ENCODE measurements at regions of chr19 and their contacts with region 1.

Region 1: DNA sequence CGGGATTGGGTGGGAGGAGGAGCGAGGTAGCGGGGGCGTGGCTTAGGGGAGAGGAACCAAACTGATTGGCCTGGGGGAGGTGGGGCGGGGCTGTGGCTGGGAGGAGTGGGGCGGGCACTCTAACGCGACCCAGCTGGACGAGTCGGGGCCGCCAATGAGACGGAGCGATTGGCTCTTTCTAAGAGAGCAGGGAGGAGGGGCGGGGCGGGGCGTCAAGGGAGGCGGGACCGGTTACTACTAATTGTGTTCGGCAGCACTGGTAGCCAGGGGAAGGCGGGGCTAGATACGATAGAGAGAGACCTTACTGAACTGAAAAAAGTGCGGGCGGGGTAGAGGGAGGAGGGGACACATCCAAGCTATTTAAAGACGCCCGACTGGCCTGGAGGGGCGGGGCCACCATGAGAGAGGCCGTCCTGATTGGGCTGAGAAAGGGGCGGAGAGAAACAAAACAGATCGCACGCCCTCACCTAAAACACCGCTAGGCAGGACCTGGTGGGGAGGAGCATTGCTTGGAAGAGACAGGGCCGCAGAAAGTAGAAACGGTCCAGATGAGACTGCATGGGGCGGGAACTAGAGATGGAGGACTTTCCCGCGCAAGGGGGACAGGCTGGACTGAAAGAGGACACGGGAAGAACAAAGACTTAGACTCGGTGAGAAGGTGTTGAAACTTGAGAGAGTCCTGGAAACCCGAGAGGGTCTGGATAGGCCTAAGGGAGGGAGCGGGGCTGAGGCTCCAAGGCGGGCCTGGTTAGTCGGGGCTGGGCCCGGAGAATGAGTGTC is at the start of gene KCNC3:
- DNase-seq: peak; percentile 92
- ATAC-seq: peak; percentile 78
- H3K4me3 ChIP-seq: peak within 1 kb of the TSS; percentile 49 to 63
- H3K27ac ChIP-seq: peak within 1 kb of the TSS; percentile 71
- H3K4me1 ChIP-seq: peaks cover 12% of the 10 kb centered on the region
- H3K27me3 ChIP-seq: no peaks in the 10 kb centered on the region
- CTCF ChIP-seq: no peak
- total RNA-seq, gene KCNC3: 10.8 TPM

Region 2: DNA sequence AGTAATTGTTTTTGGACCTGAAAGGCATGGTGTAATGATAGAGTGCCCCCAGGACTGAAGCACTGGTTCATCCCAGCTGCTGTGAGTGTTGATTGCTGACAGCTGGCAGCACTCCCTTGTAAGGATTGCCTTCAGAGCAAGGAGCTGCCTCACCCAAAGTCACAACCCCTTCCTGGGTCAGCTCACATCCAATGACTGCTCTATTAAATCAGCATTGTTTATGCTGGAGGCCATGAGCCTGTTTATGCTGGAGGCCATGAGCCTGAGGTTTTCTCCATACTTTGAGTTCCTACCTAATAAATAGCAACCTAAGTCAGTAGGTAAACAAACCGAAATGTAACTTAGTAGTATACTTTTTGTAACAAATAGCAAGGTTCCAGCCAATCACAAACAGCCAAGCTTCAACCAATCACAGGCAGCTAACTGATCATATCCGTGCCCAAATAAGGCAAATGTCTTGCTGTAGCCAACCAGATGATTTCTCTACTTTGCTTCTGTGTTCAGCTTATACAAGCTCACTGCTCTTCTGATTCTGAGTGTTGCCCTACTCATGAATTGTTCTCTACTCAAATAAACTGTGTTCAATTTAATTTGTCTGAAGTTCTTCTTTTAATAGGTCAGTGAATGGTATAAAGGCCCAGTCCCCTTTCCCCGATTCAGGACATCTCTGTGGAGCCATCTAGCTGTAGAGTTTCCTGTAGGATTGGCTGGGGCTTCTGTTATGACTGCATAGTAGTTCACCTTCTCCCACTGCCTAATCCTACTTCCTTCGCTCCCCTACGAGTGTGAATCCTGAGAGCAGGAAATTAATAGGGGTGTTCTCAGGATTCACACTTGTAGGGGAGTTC is 1352.2 kb after region 1 on chr19:
- CTCF ChIA-PET with region 1: interaction called, 10 read pairs
- POLR2A ChIA-PET with region 1: no interaction called
- in situ Hi-C with region 1: no loop called
- intact Hi-C with region 1: no loop called
- DNase-seq: no peak
- ATAC-seq: no peak
- H3K4me3 ChIP-seq: no peak overlapping the region
- H3K27ac ChIP-seq: no peak overlapping the region
- H3K4me1 ChIP-seq: no peaks in the 10 kb centered on the region
- H3K27me3 ChIP-seq: no peaks in the 10 kb centered on the region
- CTCF ChIP-seq: no peak